Naive thymus-derived CD4-positive, alpha-beta T cell (primary cell): ENCODE measurements at regions of chr3 and their contacts with region 1.

Region 1: GRCh38 chr3:12175844-12176453 is 17.2 kb upstream of the TIMP4 start:
- DNase-seq: peak in 2 of 9 donors; percentile 7 to 46
- ATAC-seq: peak; percentile 70
- H3K4me3 ChIP-seq: no peak overlapping the region
- H3K4me3 Mint-ChIP-seq: no peak overlapping the region
- H3K27ac ChIP-seq: no peak overlapping the region
- H3K27ac Mint-ChIP-seq: no peak overlapping the region
- H3K4me1 ChIP-seq: no peaks in the 10 kb centered on the region
- H3K4me1 Mint-ChIP-seq: peaks cover 0 to 9% (median 0%) of the 10 kb centered on the region in 7 donors
- H3K27me3 ChIP-seq: no peaks in the 10 kb centered on the region
- H3K27me3 Mint-ChIP-seq: no peaks in the 10 kb centered on the region

Region 2: DNA sequence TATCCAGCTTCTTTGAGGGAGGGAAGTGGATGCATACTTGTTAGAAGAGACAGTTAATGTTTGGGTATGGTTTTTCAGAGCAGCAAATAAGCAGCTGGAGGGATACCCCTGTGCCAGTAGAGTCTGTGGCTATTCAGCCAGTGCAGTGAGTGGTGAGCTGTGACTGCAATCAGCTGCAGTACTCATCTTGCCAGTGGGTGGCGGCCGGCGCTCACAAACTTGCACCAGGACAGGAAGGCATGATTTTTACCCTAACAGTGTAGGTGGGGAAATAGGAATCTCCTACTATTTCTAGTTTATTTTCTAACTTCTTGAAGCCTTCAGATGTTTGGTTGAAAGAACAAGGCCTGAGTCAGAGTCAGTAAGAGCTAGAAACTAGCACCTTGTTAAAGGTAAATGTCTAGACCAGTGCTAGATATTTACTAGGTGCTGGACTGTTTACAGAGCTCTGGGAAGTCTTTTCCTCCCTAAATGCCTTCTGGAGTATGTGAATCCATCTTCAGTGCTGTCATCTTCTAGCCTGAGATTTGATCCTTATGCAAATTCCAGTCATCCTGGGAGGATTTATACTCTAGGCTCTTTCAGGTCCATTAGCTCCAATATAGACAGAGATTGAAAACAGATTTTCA is 40.8 kb before region 1 on chr3:
- CTCF ChIA-PET with region 1: no interaction called
- POLR2A ChIA-PET with region 1: no interaction called
- intact Hi-C with region 1: loop called in 1 of 2 experiments (anchors 1 kb)
- DNase-seq: peak; percentile 9 to 68 (median 47)
- ATAC-seq: peak; percentile 83
- H3K4me3 ChIP-seq: no peak overlapping the region
- H3K4me3 Mint-ChIP-seq: no peak overlapping the region
- H3K27ac ChIP-seq: no peak overlapping the region
- H3K27ac Mint-ChIP-seq: no peak overlapping the region
- H3K4me1 ChIP-seq: no peaks in the 10 kb centered on the region
- H3K4me1 Mint-ChIP-seq: no peaks in the 10 kb centered on the region
- H3K27me3 ChIP-seq: no peaks in the 10 kb centered on the region
- H3K27me3 Mint-ChIP-seq: peaks cover 16 to 29% (median 22%) of the 10 kb centered on the region in 5 donors

Region 3: DNA sequence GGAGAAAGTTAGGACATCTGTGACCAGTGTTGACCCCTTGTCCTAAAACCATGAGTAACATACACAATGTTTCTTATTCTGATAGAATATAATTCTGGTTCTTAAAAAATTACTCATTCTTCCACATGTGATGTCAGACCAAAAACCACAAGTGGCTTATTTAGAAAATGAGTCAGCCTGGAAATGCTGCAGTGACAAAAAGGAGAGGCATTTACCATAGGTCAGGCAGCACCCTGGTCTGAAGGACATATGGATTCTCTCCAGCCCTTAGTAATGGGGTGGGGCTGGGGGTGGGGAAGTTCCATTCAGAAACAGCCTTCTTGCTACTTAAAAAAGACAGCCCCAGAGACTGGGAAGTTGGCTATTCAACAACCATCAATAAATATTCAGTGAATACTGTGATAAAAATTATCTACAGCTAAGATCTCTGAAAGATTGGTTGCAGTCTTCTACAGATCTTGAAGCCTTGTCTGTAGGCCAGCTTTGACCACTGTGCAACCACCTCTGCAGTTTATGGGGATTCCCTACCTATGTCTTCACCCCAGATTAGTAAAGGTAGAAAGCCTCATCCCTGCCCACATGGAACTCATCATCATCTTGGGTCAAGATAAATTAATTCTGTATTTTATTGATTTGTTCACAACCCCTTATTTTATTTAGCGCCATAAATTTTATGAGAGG is 17.7 kb after region 1 on chr3:
- CTCF ChIA-PET with region 1: no interaction called
- POLR2A ChIA-PET with region 1: no interaction called
- intact Hi-C with region 1: no loop called
- DNase-seq: no peak
- ATAC-seq: peak; percentile 90
- H3K4me3 ChIP-seq: no peak overlapping the region
- H3K4me3 Mint-ChIP-seq: no peak overlapping the region
- H3K27ac ChIP-seq: no peak overlapping the region
- H3K27ac Mint-ChIP-seq: peak overlapping the region in 1 of 9 donors; percentile 7
- H3K4me1 ChIP-seq: no peaks in the 10 kb centered on the region
- H3K4me1 Mint-ChIP-seq: peaks cover 0 to 41% (median 0%) of the 10 kb centered on the region in 7 donors
- H3K27me3 ChIP-seq: no peaks in the 10 kb centered on the region
- H3K27me3 Mint-ChIP-seq: peaks cover 0 to 10% (median 0%) of the 10 kb centered on the region in 5 donors

Region 4: DNA sequence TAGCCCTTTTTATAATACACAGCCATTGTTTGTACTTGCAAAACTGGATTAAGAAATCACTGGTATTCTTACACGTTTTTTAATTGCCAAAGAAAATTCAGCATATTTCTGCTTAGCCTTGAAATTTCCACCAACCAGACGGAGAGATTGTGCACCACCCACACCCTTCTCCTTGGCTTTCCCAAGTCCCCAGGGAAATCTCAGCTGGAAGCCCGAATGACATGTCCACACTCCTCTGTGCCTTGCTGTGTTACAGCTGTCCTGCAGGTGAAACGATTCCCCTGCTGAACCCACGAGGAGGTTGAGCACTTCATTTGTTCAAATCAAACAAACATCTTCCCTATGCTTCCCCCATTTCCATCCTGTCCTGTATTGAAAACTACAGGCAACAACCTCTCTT is 63.4 kb after region 1 on chr3:
- CTCF ChIA-PET with region 1: no interaction called
- POLR2A ChIA-PET with region 1: no interaction called
- intact Hi-C with region 1: no loop called
- DNase-seq: no peak
- ATAC-seq: no peak
- H3K4me3 ChIP-seq: no peak overlapping the region
- H3K4me3 Mint-ChIP-seq: no peak overlapping the region
- H3K27ac ChIP-seq: no peak overlapping the region
- H3K27ac Mint-ChIP-seq: peak overlapping the region in 1 of 9 donors; percentile 56
- H3K4me1 ChIP-seq: no peaks in the 10 kb centered on the region
- H3K4me1 Mint-ChIP-seq: no peaks in the 10 kb centered on the region
- H3K27me3 ChIP-seq: peaks cover 0 to 3% of the 10 kb centered on the region in 2 donors
- H3K27me3 Mint-ChIP-seq: peaks cover 7 to 20% (median 15%) of the 10 kb centered on the region in 5 donors